ENCODE measurements at regions of chr18 and their contacts with region 1.

Region 1: DNA sequence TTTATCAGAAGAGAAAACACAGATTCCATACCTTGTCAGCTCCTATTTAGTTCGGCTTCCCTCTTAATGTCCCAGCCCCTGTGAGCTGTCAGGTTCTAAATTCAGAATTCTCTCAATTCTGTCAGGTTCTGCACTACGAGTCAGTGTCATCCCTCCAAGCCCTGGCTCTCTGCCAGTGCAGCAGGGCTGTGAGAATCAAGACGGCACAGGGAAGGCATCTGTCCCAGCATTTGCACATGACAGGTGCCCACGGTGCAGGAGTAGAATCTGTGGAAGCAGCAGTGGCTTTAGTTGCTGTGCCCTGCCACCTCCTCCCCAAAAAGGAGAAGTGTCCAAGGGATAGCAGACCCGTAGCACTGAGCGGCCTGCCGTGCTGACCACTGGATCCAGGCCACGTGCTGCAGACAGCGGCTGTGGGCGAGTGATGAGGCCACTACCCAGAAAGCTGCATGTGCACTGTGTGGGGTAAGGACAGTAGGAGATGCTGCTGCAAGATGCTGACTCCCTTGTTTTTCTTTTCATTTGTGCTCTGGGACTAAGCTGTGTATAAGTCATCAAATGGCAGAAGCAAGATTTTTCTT is 12.8 kb downstream of the RBFA start:
- DNase-seq: no peak
- H3K4me3 ChIP-seq: no peak overlapping the region
- H3K4me3 Mint-ChIP-seq: no peak overlapping the region
- H3K27ac ChIP-seq: no peak overlapping the region
- H3K27ac Mint-ChIP-seq: peak overlapping the region in 1 of 7 donors; percentile 42
- H3K4me1 ChIP-seq: no peaks in the 10 kb centered on the region
- H3K4me1 Mint-ChIP-seq: no peaks in the 10 kb centered on the region
- H3K27me3 ChIP-seq: no peaks in the 10 kb centered on the region
- H3K27me3 Mint-ChIP-seq: peaks cover 0 to 2% (median 0%) of the 10 kb centered on the region in 3 donors
- CTCF ChIP-seq: no peak

Region 2: DNA sequence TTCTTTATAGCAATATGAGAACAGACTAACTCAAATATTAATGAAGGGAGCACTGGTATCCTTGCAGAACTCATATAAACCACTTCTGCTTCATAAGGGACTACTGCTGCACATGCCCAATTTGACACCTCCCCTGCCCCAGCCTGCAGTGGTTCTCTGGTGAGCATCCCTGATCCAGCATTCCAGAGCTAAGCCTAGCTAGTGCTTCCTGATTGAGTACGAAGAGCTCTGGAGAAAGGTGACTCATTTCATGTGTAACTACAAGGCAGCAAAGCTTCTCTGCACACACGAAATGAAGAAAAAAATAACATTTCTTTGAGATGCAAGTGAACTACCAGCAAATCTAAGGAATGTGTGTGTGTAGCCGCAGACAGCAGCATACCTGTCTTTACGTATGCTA is 39.2 kb after region 1 on chr18:
- intact Hi-C with region 1: loop called in 1 of 2 experiments (anchors 5 kb)
- DNase-seq: no peak
- H3K4me3 ChIP-seq: no peak overlapping the region
- H3K4me3 Mint-ChIP-seq: no peak overlapping the region
- H3K27ac ChIP-seq: no peak overlapping the region
- H3K27ac Mint-ChIP-seq: no peak overlapping the region
- H3K4me1 ChIP-seq: no peaks in the 10 kb centered on the region
- H3K4me1 Mint-ChIP-seq: no peaks in the 10 kb centered on the region
- H3K27me3 ChIP-seq: no peaks in the 10 kb centered on the region
- H3K27me3 Mint-ChIP-seq: peaks cover 0 to 3% (median 3%) of the 10 kb centered on the region in 3 donors
- CTCF ChIP-seq: no peak

Region 3: GRCh38 chr18:80147418-80148325 is 100.6 kb after region 1 on chr18:
- intact Hi-C with region 1: no loop called
- DNase-seq: peak; percentile 62 to 75 (median 70)
- H3K4me3 ChIP-seq: peak overlapping the region; percentile 53 to 85 (median 54)
- H3K4me3 Mint-ChIP-seq: peak overlapping the region; percentile 85 to 93
- H3K27ac ChIP-seq: peak overlapping the region; percentile 27 to 57
- H3K27ac Mint-ChIP-seq: peak overlapping the region in 6 of 7 donors; percentile 72 to 89 (median 86)
- H3K4me1 ChIP-seq: peaks cover 24 to 29% of the 10 kb centered on the region in 2 donors
- H3K4me1 Mint-ChIP-seq: peaks cover 26% of the 10 kb centered on the region
- H3K27me3 ChIP-seq: peaks cover 0 to 11% of the 10 kb centered on the region in 2 donors
- H3K27me3 Mint-ChIP-seq: peaks cover 11 to 18% (median 12%) of the 10 kb centered on the region in 3 donors
- CTCF ChIP-seq: no peak

Measured in CD14-positive monocyte (primary cell).